Colonic mucosa (tissue), 4 donors: ENCODE measurements at regions of chr11 and their contacts with region 1.

Region 1: GRCh38 chr11:80320765-80321164 is 879.9 kb upstream of the TENM4 start:
- DNase-seq: no peak
- H3K4me3 ChIP-seq: no peak overlapping the region
- H3K27ac ChIP-seq: no peak overlapping the region
- H3K4me1 ChIP-seq: no peaks in the 10 kb centered on the region
- H3K27me3 ChIP-seq: no peaks in the 10 kb centered on the region
- CTCF ChIP-seq: no peak

Region 2: GRCh38 chr11:80196932-80197550 is 123.7 kb before region 1 on chr11:
- intact Hi-C with region 1: no loop called
- DNase-seq: no peak
- H3K4me3 ChIP-seq: no peak overlapping the region
- H3K27ac ChIP-seq: no peak overlapping the region
- H3K4me1 ChIP-seq: no peaks in the 10 kb centered on the region
- H3K27me3 ChIP-seq: no peaks in the 10 kb centered on the region
- CTCF ChIP-seq: no peak

Region 3: DNA sequence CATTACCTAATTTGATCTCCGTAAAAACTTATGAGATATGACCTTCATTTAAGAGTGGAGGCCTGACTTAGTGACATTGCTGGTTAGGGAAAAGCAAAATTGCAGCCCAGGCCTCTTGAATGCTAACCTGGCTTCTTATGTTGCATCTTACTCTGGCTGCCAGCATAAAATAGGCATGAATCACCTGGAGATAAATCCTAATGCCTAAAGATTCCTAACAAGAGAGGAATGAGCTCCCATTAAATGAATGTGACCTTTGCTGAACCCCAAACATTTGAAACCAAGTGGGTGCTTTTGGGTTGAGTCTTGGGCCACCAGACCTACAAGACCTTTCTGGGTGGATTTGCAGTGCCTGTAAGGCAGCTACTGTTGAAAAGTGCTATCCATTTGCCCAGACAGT is 265.7 kb after region 1 on chr11:
- intact Hi-C with region 1: loop called (anchors 10 kb)
- DNase-seq: no peak
- H3K4me3 ChIP-seq: no peak overlapping the region
- H3K27ac ChIP-seq: no peak overlapping the region
- H3K4me1 ChIP-seq: no peaks in the 10 kb centered on the region
- H3K27me3 ChIP-seq: no peaks in the 10 kb centered on the region
- CTCF ChIP-seq: no peak